ENCODE measurements at regions of chr11 and their contacts with region 1.

Region 1: DNA sequence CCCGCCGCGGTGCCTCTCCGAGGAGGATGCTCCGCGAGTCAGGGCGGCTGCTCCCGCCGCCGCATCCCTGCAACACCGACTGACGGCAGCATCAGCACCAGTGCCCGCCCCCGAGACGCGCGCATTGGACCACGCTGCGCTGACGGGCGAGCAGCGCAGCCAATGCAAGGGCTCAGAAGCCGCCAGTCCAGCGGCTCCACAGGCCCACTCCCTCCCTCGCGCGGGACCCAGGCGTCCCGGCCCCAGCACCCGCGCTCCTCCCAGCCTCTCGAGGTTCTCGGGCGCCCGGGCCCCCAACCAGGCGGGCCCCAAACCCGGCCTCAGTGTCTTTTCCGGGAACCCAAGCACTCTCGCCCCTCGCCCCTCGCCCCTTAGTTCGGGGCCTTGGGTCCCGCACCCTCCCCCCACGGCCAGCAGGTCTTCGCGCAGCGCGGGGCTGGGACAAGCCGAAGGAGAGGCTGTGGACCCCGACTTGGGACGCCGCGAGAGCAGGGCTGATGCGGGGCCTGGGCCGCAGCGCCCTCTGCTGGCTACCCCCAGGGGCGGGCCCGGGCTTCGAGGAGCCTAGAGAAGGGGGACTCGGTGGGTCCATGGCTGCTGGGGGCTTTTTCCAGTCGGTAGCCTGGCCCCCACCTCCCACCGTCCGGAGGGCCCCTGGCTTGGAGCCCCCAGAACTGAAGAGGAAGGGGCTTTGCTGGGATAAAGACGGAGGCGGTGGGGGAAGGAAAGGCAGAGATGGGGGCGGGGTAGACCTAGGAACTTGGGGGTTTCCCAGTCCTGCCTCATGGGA is at the start of gene NRXN2:
- DNase-seq: peak; percentile 85 to 93 (median 88)
- ATAC-seq: peak; percentile 93 to 98 (median 97)
- H3K4me3 ChIP-seq: peak within 1 kb of the TSS; percentile 27 to 90 (median 84)
- H3K27ac ChIP-seq: peak within 1 kb of the TSS in 7 of 12 donors; percentile 44 to 79 (median 69)
- H3K4me1 ChIP-seq: peaks cover 0 to 9% (median 2%) of the 10 kb centered on the region in 12 donors
- H3K27me3 ChIP-seq: peaks cover 0 to 41% (median 20%) of the 10 kb centered on the region in 9 donors
- CTCF ChIP-seq: peak; percentile 92 to 100 (median 97)
- POLR2A ChIP-seq: no peak
- total RNA-seq, gene NRXN2: 0.62 to 5.5 (median 1.3) TPM in 8 of 9 donors, not detected in the other

Region 2: GRCh38 chr11:64246871-64247728 is 476.2 kb before region 1 on chr11 and contains the start of gene PPP1R14B:
- intact Hi-C with region 1: no loop called
- DNase-seq: peak; percentile 90 to 94 (median 93)
- ATAC-seq: peak; percentile 58 to 74 (median 68)
- H3K4me3 ChIP-seq: peak within 1 kb of the TSS; percentile 56 to 90 (median 72)
- H3K27ac ChIP-seq: peak within 1 kb of the TSS; percentile 49 to 96 (median 92)
- H3K4me1 ChIP-seq: peaks cover 5 to 65% (median 37%) of the 10 kb centered on the region in 12 donors
- H3K27me3 ChIP-seq: no peaks in the 10 kb centered on the region
- CTCF ChIP-seq: peak in 7 of 12 donors; percentile 8 to 31 (median 18)
- POLR2A ChIP-seq: peak in 1 of 2 donors; percentile 50
- total RNA-seq, gene PPP1R14B: 69.6 to 244 (median 90.4) TPM

Region 3: DNA sequence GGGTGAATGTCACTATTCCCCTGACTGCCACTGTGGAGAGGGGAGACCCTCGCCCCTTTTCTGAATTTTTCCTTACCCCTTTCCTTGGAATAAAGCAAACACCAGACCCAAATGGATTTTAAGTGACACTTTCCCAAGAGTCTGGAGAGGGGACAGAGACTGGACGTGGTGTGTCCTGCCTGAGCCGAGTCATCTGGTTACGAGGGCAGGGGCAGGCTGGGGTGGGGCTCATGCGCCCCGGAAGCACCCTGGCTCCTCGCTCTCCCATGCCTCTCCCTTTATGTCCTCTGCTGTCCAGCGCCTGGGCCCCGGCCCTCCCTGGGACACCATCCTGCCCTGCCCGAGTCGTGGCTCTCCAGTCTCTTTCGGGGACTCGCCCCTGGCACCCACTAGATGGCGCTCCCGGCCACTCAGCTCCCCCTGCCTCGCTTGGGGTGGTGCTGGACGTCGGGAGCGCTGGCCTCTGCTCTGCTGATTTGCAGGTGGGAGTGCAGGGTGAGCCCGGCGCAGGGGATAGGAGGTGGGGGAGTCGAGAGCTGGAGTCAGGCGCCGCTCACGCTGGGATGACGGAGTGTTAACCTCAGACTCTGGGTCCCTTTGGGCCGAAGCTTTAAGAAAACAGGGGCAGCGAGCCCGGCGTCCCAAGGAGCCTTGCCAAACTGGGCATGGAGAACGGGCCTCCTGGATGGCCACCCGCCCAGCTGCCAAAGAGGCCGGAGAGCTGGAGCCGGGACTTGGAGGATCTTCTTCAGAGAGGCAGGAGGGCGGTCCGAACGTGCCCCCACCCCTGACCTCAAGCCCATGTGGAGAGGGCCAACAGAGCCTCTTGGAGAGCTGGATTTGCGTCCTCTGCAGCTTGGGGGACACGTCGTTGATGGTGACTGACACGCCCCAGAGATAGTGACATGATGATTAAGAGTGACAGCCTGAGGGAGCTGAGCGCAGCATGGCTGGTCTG is 274.4 kb before region 1 on chr11:
- intact Hi-C with region 1: loop called in 3 of 10 experiments (anchors 10 kb)
- DNase-seq: peak; percentile 79 to 93 (median 83)
- ATAC-seq: peak; percentile 87 to 98 (median 96)
- H3K4me3 ChIP-seq: peak overlapping the region in 10 of 12 donors; percentile 10 to 51 (median 36)
- H3K27ac ChIP-seq: peak overlapping the region in 6 of 12 donors; percentile 12 to 92 (median 27)
- H3K4me1 ChIP-seq: peaks cover 0 to 29% (median 14%) of the 10 kb centered on the region in 12 donors
- H3K27me3 ChIP-seq: peaks cover 0 to 21% (median 0%) of the 10 kb centered on the region in 9 donors
- CTCF ChIP-seq: peak; percentile 76 to 91 (median 84)
- POLR2A ChIP-seq: no peak

Region 4: DNA sequence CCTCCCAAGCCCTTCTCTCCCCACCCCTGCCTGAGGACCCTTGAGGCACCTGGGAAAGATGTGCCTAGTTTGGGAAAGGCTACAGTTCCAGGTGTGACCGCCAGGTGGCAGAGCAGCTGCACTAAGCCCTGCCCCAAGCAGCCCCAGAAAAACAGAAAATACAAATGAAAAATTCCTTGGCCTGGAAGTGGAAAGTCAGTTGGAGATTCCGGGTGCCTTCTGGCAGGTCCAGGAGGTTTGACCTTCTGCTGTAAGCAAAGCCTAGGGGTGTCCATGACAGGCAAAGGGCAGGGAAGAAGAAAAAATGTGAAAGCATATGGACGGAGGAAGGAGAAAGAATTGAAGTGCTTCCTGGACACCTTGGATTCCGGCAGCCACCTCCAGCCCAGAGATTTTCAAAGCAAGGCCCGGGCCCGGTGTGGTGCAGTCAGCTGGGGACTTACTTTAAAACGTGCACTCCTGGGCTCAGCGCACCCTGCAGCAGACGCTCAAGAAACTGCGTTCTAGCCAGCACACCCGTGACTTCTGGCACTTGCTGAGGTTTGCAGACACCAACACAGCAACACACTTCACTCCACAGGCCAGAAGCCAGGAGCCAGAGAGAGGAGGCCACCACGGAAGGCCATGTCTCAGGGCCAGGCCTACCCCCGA is 169.6 kb before region 1 on chr11:
- intact Hi-C with region 1: loop called in 1 of 10 experiments (anchors 5 kb)
- DNase-seq: peak in 4 of 5 donors; percentile 47 to 71 (median 52)
- ATAC-seq: peak; percentile 57 to 65 (median 63)
- H3K4me3 ChIP-seq: no peak overlapping the region
- H3K27ac ChIP-seq: peak overlapping the region; percentile 5 to 80 (median 70)
- H3K4me1 ChIP-seq: peaks cover 0 to 27% (median 18%) of the 10 kb centered on the region in 12 donors
- H3K27me3 ChIP-seq: peaks cover 0 to 3% (median 0%) of the 10 kb centered on the region in 9 donors
- CTCF ChIP-seq: peak; percentile 84 to 98 (median 98)
- POLR2A ChIP-seq: no peak

Region 5: DNA sequence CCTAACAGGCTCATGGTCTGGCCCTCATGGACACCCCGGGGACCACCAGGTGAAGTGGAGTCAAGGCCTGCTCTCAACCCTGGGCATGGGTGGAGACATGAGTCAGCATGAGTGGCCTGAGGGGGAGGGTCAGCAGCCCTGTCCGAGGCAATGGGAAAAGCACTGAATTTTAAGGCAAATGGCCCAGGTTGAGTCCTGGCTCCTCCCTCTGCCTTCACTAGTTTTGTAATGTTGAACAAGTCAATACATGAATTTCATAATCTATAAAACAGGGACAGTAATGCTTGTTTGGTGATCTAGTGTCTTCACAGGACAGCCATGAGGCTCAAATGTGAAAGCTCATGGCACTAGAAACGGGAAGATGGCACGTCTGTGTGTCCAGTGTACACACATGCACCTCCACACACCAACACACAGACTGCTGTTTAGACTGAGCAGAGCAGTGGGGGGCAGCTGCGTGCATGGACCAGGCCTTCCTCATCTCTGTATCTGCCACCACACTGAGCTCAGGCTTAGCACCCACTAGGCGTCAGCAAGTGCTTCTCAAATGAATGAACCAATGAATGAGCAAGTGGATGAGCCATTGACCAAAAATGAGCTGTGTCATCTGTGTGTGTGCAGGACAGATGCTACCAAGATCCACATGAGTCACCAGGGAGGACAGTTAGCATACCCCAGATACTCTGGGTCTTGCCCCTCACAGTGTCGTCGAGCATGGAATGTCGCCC is 63.7 kb before region 1 on chr11:
- intact Hi-C with region 1: loop called in 1 of 10 experiments (anchors 10 kb)
- DNase-seq: no peak
- ATAC-seq: no peak
- H3K4me3 ChIP-seq: no peak overlapping the region
- H3K27ac ChIP-seq: no peak overlapping the region
- H3K4me1 ChIP-seq: peaks cover 0 to 37% (median 3%) of the 10 kb centered on the region in 12 donors
- H3K27me3 ChIP-seq: peaks cover 0 to 2% (median 0%) of the 10 kb centered on the region in 9 donors
- CTCF ChIP-seq: no peak
- POLR2A ChIP-seq: no peak

Region 6: GRCh38 chr11:64688534-64688982 is 34.8 kb before region 1 on chr11:
- intact Hi-C with region 1: loop called in 7 of 10 experiments (anchors 1 to 5 kb)
- DNase-seq: peak; percentile 87 to 94 (median 90)
- ATAC-seq: peak; percentile 92 to 95 (median 94)
- H3K4me3 ChIP-seq: peak overlapping the region in 10 of 12 donors; percentile 27 to 60 (median 47)
- H3K27ac ChIP-seq: peak overlapping the region; percentile 6 to 80 (median 68)
- H3K4me1 ChIP-seq: peaks cover 0 to 26% (median 12%) of the 10 kb centered on the region in 12 donors
- H3K27me3 ChIP-seq: peaks cover 0 to 13% (median 3%) of the 10 kb centered on the region in 9 donors
- CTCF ChIP-seq: peak; percentile 90 to 96 (median 94)
- POLR2A ChIP-seq: no peak